Activated naive CD8-positive, alpha-beta T cell treated with anti-CD3 and anti-CD28 coated beads, Interleukin-2, amount 10 ng/mL, durations not matched to agents 7 days and 5 days (primary cell): ENCODE measurements at regions of chr22 and their contacts with region 1.

Region 1: GRCh38 chr22:37658133-37659065 is at the start of gene PDXP:
- DNase-seq: peak; percentile 99
- ATAC-seq: peak; percentile 98
- H3K4me3 Mint-ChIP-seq: peak within 1 kb of the TSS; percentile 95
- H3K27ac Mint-ChIP-seq: peak within 1 kb of the TSS; percentile 95
- H3K4me1 Mint-ChIP-seq: peaks cover 35% of the 10 kb centered on the region
- H3K27me3 Mint-ChIP-seq: no peaks in the 10 kb centered on the region
- total RNA-seq, gene PDXP: 16.4 to 16.6 TPM

Region 2: GRCh38 chr22:37581504-37581903 is 76.9 kb before region 1 on chr22:
- POLR2A ChIA-PET with region 1: no interaction called
- DNase-seq: no peak
- ATAC-seq: no peak
- H3K4me3 Mint-ChIP-seq: no peak overlapping the region
- H3K27ac Mint-ChIP-seq: no peak overlapping the region
- H3K4me1 Mint-ChIP-seq: peaks cover 9% of the 10 kb centered on the region
- H3K27me3 Mint-ChIP-seq: peaks cover 19% of the 10 kb centered on the region

Region 3: GRCh38 chr22:37633625-37634416 is 24.6 kb before region 1 on chr22:
- POLR2A ChIA-PET with region 1: interaction called, 17 read pairs
- DNase-seq: peak; percentile 79
- ATAC-seq: peak; percentile 62
- H3K4me3 Mint-ChIP-seq: peak overlapping the region; percentile 82
- H3K27ac Mint-ChIP-seq: peak overlapping the region; percentile 99
- H3K4me1 Mint-ChIP-seq: peaks cover 67% of the 10 kb centered on the region
- H3K27me3 Mint-ChIP-seq: no peaks in the 10 kb centered on the region

Region 4: GRCh38 chr22:37643225-37643847 is 15.1 kb before region 1 on chr22:
- POLR2A ChIA-PET with region 1: interaction called, 38 read pairs
- DNase-seq: peak; percentile 92
- ATAC-seq: peak; percentile 58
- H3K4me3 Mint-ChIP-seq: peak overlapping the region; percentile 66
- H3K27ac Mint-ChIP-seq: peak overlapping the region; percentile 79
- H3K4me1 Mint-ChIP-seq: peaks cover 27% of the 10 kb centered on the region
- H3K27me3 Mint-ChIP-seq: no peaks in the 10 kb centered on the region

Region 5: GRCh38 chr22:37686002-37686982 is 27.9 kb after region 1 on chr22 and contains the start of gene NOL12:
- POLR2A ChIA-PET with region 1: interaction called, 216 read pairs
- DNase-seq: peak; percentile 85
- ATAC-seq: peak; percentile 84
- H3K4me3 Mint-ChIP-seq: peak within 1 kb of the TSS; percentile 97
- H3K27ac Mint-ChIP-seq: peak within 1 kb of the TSS; percentile 99
- H3K4me1 Mint-ChIP-seq: peaks cover 19% of the 10 kb centered on the region
- H3K27me3 Mint-ChIP-seq: no peaks in the 10 kb centered on the region
- total RNA-seq, gene NOL12: 42.8 to 50.4 TPM